PC-9 (cell line): ENCODE measurements at regions of chr19 and their contacts with region 1.

Region 1: GRCh38 chr19:7152568-7152967 is 83.1 kb downstream of the ZNF557 start:
- DNase-seq: no peak
- H3K4me3 ChIP-seq: no peak overlapping the region
- H3K27ac ChIP-seq: no peak overlapping the region
- H3K4me1 ChIP-seq: no peaks in the 10 kb centered on the region
- H3K27me3 ChIP-seq: no peaks in the 10 kb centered on the region
- CTCF ChIP-seq: no peak

Region 2: GRCh38 chr19:7069042-7069903 is 83.3 kb before region 1 on chr19 and contains the start of gene ZNF557:
- CTCF ChIA-PET with region 1: no interaction called
- POLR2A ChIA-PET with region 1: no interaction called
- intact Hi-C with region 1: no loop called
- DNase-seq: peak; percentile 77 to 94
- H3K4me3 ChIP-seq: peak within 1 kb of the TSS; percentile 94
- H3K27ac ChIP-seq: no peak within 1 kb of the TSS
- H3K4me1 ChIP-seq: no peaks in the 10 kb centered on the region
- H3K27me3 ChIP-seq: no peaks in the 10 kb centered on the region
- CTCF ChIP-seq: no peak
- total RNA-seq, gene ZNF557: 2.6 and 3.9 TPM in 2 replicates

Region 3: GRCh38 chr19:7340959-7341837 is 188.6 kb after region 1 on chr19:
- CTCF ChIA-PET with region 1: no interaction called
- POLR2A ChIA-PET with region 1: no interaction called
- intact Hi-C with region 1: loop called (anchors 1 kb)
- DNase-seq: peak in 1 of 2 experiments; percentile 65
- H3K4me3 ChIP-seq: no peak overlapping the region
- H3K27ac ChIP-seq: no peak overlapping the region
- H3K4me1 ChIP-seq: no peaks in the 10 kb centered on the region; the same call in 1 of the 2 replicates
- H3K27me3 ChIP-seq: no peaks in the 10 kb centered on the region
- CTCF ChIP-seq: peak; percentile 90

Region 4: DNA sequence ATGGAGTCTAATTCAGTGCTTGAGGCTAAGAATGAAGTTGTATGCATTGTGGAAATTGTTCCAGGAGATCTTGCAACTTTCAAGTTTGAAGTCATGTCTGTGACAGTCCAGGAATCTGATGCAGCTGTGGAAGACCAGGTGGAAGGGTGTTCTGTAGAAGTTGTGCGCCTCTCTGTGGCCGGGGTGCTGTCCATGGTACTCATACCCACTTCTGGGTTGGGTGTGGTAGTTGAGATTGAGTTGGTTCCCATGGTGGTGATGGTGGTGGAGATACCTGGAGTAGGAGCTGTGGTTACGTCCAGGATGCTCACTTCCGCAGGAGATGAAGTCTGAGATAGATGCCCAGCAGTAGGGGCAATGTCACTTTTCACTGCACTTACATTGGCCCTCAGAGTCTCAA is 1813.3 kb after region 1 on chr19:
- CTCF ChIA-PET with region 1: interaction called, 21 read pairs
- POLR2A ChIA-PET with region 1: no interaction called
- intact Hi-C with region 1: no loop called
- DNase-seq: peak in 1 of 2 experiments; percentile 24
- H3K4me3 ChIP-seq: no peak overlapping the region
- H3K27ac ChIP-seq: no peak overlapping the region
- H3K4me1 ChIP-seq: no peaks in the 10 kb centered on the region
- H3K27me3 ChIP-seq: no peaks in the 10 kb centered on the region
- CTCF ChIP-seq: no peak